Heart right ventricle (tissue), 16 donors: ENCODE measurements at regions of chr14 and their contacts with region 1.

Region 1: DNA sequence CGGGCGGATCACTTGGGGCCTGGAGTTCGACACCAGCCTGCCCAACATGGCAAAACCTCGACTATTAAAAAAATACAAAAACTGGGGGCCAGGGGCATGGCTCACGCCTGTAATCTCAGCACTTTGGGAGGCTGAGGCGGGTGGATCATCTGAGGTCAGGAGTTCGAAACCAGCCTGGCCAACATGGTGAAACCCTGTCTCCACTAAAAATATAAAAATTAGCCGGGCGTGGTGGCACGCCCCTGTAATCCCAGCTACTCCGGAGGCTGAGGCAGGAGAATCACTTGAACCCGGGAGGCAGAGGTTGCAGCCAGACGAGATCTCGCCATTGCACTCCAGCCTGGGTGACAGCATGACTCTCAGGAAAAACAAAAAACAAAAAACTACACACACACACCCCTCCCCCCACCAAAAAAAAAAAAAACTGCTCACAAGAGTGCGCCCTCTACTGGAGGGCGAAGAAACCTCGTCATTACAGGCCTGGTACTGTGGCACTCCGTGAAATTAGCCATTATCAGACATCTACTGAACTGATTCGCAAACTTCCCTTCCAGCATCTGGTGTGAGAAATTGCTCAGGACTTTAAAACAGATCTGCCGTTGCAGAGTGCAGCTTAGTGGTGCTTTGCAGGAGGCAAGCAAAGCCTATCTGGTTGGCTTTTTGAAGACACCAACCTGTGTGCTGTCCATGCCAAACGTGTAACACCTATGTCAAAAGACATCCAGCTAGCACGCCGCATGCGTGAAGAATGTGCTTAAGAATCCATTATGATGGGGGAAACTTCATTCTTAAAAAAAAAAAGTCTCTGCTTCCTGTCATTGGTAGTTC is 7.7 kb downstream of the PPP1R3E start:
- DNase-seq: peak in 1 of 2 donors; percentile 28
- ATAC-seq: peak; percentile 36 to 83 (median 68)
- H3K4me3 ChIP-seq: peak overlapping the region in 1 of 10 donors; percentile 25
- H3K27ac ChIP-seq: peak overlapping the region in 1 of 10 donors; percentile 4
- H3K4me1 ChIP-seq: peaks cover 0 to 40% (median 30%) of the 10 kb centered on the region in 9 donors
- H3K27me3 ChIP-seq: no peaks in the 10 kb centered on the region
- CTCF ChIP-seq: peak; percentile 76 to 90 (median 85)

Region 2: DNA sequence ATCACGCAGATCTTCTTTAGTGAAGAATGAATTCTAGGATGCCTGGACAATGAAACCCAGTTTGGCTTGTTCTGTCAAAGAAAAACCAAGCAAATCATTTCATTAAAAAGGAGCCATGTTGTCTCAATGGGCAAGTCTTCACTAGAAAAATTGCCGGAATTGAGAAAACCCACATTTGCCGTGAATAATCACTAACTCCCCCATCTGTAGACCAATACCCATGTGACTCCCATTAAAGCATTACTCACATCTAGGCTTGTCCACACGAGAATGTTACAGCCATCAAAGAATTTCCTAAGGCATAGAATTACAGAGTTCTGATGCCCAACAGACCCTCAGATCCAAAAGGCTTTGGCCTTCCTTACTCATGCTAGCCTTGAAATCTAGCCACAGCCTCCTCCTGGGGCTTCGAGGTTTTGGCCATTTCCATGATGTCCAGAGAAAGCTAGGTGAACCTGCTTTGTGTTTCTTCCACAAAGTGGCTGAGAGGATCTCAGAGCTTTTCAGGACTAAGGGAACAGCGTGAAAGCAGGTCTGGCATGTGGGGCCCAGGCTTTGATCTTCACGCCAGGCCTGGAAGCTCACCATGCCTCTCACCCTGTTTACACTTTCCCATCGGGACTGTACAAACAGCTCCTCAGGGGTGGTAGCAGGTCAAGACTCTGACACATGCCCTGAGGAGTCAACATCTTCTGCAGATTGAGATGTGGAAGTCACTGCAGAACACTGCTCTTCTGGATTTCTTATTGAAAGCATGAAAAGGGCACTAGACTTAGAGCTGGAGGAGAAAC is 123.5 kb before region 1 on chr14:
- intact Hi-C with region 1: no loop called
- DNase-seq: no peak
- ATAC-seq: no peak
- H3K4me3 ChIP-seq: no peak overlapping the region
- H3K27ac ChIP-seq: no peak overlapping the region
- H3K4me1 ChIP-seq: peaks cover 0 to 51% (median 14%) of the 10 kb centered on the region in 9 donors
- H3K27me3 ChIP-seq: no peaks in the 10 kb centered on the region
- CTCF ChIP-seq: no peak

Region 3: GRCh38 chr14:23186913-23187654 is 107.9 kb before region 1 on chr14:
- intact Hi-C with region 1: loop called in 1 of 10 experiments (anchors 10 kb)
- DNase-seq: peak in 1 of 2 donors; percentile 38
- ATAC-seq: peak in 7 of 8 donors; percentile 51 to 70 (median 62)
- H3K4me3 ChIP-seq: no peak overlapping the region
- H3K27ac ChIP-seq: no peak overlapping the region
- H3K4me1 ChIP-seq: peaks cover 0 to 21% (median 2%) of the 10 kb centered on the region in 9 donors
- H3K27me3 ChIP-seq: peaks cover 0 to 10% (median 3%) of the 10 kb centered on the region in 7 donors
- CTCF ChIP-seq: peak; percentile 55 to 88 (median 73)